ENCODE measurements at regions of chr5 and their contacts with region 1.

Region 1: DNA sequence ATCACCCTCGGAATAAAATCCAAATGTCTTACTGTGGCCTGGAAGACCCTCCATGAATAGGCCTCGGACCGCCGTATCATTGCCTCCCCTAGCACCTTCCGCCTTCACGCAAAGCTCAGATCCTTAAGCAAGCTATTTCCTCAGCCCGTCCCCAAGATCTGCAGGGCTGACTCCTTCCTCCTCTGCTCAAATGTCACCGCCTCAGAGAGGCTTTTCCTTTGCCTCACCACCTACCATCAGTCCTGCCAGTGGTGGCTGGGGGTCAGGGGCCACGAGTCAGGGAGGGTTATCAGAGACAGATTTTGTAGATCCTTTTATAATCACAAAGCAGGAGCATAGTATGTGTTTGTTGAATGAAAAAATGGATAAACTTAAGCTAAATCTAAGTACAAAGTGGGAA is 74.4 kb upstream of the KIF2A start:
- DNase-seq: no peak
- H3K4me3 ChIP-seq: no peak overlapping the region
- H3K27ac ChIP-seq: no peak overlapping the region
- H3K4me1 ChIP-seq: no peaks in the 10 kb centered on the region
- H3K27me3 ChIP-seq: no peaks in the 10 kb centered on the region
- CTCF ChIP-seq: no peak

Region 2: GRCh38 chr5:62305715-62306322 is 74.2 kb after region 1 on chr5 and contains the start of gene KIF2A:
- CTCF ChIA-PET with region 1: no interaction called
- dilution Hi-C with region 1: no loop called
- in situ Hi-C with region 1: no loop called
- intact Hi-C with region 1: loop called (anchors 5 kb)
- DNase-seq: peak; percentile 94
- H3K4me3 ChIP-seq: peak within 1 kb of the TSS; percentile 83 to 96 (median 88)
- H3K27ac ChIP-seq: peak within 1 kb of the TSS; percentile 76
- H3K4me1 ChIP-seq: peaks cover 12% of the 10 kb centered on the region
- H3K27me3 ChIP-seq: no peaks in the 10 kb centered on the region
- CTCF ChIP-seq: no peak
- total RNA-seq, gene KIF2A: 35.2 to 56.5 TPM

Region 3: DNA sequence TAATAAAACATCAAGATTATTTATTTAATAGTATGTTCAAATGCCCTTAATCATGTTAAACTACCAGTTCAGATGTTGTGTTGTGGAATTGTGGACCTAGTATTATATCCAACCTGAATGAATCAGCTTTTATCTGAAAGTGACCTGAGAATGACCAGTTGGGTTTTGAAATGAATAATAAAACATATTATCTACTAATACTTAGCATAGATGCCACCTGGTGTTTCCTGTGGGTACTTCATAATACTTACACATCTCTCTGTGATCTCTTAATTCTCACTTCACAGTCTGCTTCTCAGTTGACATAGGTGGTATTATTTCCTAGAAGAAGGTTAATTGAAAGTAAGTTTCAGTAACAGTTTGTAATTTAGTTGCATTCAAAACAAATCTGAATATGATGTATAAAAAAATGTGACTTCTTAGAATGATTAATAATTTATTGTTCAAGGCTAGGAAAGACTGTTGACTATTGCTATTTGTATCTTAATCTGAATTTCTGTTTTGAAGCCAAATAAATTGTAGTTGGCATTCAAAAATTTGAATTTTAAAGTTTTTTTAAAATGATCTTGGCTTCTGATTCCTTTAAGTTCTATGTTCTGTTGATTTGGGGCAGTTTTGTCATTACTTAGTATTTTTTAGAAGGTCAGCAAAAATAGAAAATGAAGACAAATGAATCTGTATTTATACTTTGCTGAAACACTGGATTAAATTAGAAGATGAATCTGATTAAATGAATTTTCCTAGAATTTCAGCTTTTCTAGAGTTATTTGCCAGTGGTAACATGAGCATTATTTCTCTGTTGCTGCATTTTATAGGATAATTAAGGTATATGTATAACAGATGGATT is 122.7 kb after region 1 on chr5:
- CTCF ChIA-PET with region 1: no interaction called
- dilution Hi-C with region 1: no loop called
- in situ Hi-C with region 1: loop called (anchors 5 to 10 kb)
- intact Hi-C with region 1: no loop called
- DNase-seq: peak; percentile 40
- H3K4me3 ChIP-seq: no peak overlapping the region
- H3K27ac ChIP-seq: no peak overlapping the region
- H3K4me1 ChIP-seq: no peaks in the 10 kb centered on the region
- H3K27me3 ChIP-seq: no peaks in the 10 kb centered on the region
- CTCF ChIP-seq: peak; percentile 54 to 57

Measured in mammary epithelial cell (primary cell).